ENCODE measurements at regions of chr22 and their contacts with region 1.

Region 1: DNA sequence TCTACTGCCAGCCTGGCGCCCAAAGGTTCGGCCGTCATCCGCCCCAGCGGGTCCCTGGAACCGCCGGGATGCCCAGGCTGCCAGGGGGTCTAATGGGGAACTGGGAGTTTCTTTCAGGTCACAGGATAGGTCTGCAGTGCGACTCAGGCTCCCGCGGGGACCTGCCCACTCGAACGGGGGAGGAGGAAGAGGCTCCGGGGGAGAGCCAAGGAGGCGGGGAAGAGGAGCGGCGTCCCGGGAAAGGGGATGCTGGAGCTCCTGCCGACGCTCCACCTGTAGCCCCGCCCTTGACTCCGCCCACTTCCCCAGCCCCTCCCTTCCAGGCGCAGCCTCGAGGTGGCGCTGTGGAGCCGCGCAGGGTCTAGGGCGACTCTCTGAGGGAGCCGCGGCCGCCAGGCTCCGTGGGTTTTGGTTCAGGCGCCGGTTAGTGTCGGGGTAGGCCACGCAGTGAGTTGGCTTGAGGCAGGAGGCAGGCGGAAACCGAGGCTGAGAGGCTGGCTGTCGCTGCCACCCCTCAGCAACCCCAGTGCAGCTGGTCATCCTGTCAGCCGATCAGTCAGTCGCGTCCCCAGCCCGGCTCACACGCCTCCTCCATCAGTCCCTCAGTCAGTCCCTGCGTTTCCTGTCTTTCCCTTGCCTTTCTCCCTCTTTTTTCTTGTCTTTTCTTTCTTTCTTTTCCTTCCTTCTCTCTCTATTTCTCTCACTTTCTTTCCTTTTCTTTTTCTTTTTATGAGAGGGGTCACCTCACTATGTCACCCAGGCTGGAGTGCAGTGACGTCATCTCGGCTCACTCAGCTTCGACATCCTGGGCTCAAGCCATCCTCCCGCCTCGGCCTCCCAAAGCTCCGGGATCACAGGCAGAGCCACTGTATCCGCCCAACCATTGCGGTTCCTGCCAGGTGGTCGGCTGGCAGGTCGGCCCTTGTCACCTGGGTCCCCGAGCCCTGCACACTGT is 26.4 kb downstream of the YWHAH start:
- DNase-seq: peak; percentile 71 to 99 (median 90)
- ATAC-seq: peak; percentile 91 to 97 (median 96)
- H3K4me3 ChIP-seq: peak overlapping the region; percentile 7 to 55 (median 33)
- H3K27ac ChIP-seq: peak overlapping the region in 1 of 4 donors; percentile 12
- H3K4me1 ChIP-seq: peaks cover 0 to 3% (median 3%) of the 10 kb centered on the region in 3 donors
- H3K27me3 ChIP-seq: no peaks in the 10 kb centered on the region
- CTCF ChIP-seq: peak; percentile 93 to 97 (median 94)

Region 2: DNA sequence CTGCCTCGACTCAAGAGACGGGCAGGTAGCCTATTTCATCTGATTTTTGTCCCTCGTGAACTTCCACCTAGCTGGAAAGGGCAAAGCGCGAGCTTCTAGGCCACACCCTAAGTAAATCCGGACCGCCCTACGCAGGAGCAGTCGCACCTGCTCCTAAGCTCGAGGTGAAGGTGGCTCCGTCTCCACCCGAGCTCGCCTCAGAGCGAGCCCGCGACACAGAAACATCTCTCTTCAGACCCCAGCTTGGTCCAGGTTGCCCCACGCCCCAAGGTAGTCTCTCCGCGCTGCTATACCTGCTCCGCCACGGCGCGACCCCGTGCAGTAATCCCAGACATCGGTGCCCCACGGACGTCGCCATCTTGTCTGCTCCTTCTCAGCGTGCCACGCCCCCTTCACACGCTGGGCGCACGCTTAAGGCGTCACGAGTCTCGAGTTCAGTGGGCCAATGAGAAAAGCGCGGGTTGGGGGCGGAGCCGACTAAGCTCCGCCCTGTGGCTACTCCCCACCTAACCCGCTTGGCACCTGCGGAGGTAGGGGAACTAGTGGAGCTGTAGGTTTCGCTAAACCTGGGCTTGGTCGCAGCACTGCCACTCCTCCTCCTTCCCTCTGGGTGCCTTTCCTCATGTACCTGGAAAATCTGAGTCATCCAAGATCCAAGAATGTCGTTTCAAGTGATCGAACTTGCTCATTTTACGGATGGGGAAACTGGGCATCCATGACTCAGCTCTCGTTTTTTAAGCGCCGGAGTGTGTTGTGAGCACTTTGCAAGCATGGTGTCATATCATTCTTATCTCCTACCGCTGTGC is 308.7 kb before region 1 on chr22 and contains the start of gene PISD:
- intact Hi-C with region 1: loop called in 1 of 3 experiments (anchors 10 kb)
- DNase-seq: peak; percentile 94 to 98 (median 97)
- ATAC-seq: peak; percentile 98 to 99 (median 99)
- H3K4me3 ChIP-seq: peak within 1 kb of the TSS; percentile 43 to 98 (median 88)
- H3K27ac ChIP-seq: peak within 1 kb of the TSS; percentile 35 to 84 (median 78)
- H3K4me1 ChIP-seq: peaks cover 0 to 11% (median 6%) of the 10 kb centered on the region in 3 donors
- H3K27me3 ChIP-seq: no peaks in the 10 kb centered on the region
- CTCF ChIP-seq: no peak
- total RNA-seq, gene PISD: 11.6 to 29.3 (median 16.9) TPM

Region 3: DNA sequence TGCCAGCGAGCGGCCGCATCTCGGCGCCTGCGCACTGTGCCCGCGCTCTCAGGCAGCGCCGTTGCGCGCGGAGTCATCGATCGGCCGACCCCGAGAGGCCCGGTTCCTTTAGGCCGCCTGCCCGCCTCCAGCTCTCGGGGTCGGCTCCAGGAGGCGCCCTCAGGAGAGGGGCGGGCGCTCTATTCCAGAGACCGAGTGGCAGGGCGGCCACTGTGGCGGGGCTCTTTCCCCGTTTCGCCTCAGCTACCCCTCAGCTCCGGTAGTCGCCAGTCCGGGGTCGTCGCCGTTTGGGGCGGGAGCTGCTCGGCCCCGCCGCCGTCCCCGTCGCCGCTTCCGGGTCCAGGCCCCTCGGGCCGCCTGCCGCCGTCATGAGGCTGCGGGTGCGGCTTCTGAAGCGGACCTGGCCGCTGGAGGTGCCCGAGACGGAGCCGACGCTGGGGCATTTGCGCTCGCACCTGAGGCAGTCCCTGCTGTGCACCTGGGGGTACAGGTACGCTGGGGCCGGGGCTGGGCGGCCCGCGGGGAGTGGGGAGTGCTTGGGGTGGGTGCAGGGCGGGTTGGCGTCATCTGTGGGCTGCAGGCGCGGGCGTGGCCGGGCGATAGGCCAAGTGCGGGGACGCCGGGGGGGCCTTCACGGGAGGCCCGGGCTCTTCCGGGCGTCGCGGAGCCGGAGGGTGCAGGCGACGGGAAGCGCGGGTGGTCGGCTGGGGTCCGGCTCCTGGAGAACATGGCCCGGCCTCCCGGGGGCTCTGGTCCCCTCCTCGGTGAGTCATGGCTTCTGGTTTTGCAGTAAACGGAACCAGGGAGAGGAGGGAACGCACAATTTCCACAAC is 504.1 kb after region 1 on chr22 and contains the start of gene FBXO7:
- intact Hi-C with region 1: loop called in 1 of 3 experiments (anchors 10 kb)
- DNase-seq: peak; percentile 87 to 96 (median 91)
- ATAC-seq: peak; percentile 88 to 93 (median 92)
- H3K4me3 ChIP-seq: peak within 1 kb of the TSS; percentile 75 to 96 (median 88)
- H3K27ac ChIP-seq: peak within 1 kb of the TSS; percentile 97 to 100 (median 100)
- H3K4me1 ChIP-seq: peaks cover 7 to 22% (median 18%) of the 10 kb centered on the region in 3 donors
- H3K27me3 ChIP-seq: no peaks in the 10 kb centered on the region
- CTCF ChIP-seq: no peak
- total RNA-seq, gene FBXO7: 24.4 to 40.2 (median 28.7) TPM

Measured in pancreas (tissue), 10 donors.